CD8-positive, alpha-beta T cell (primary cell): ENCODE measurements at regions of chr5 and their contacts with region 1.

Region 1: GRCh38 chr5:73565139-73565968 is at the starts of genes ANKRA2 and UTP15:
- DNase-seq: peak; percentile 97 to 100 (median 99)
- ATAC-seq: peak; percentile 96
- H3K4me3 ChIP-seq: peak within 1 kb of the TSS; percentile 72 to 81
- H3K4me3 Mint-ChIP-seq: peak within 1 kb of the TSS; percentile 100
- H3K27ac ChIP-seq: peak within 1 kb of the TSS; percentile 94 to 95
- H3K27ac Mint-ChIP-seq: peak within 1 kb of the TSS; percentile 100
- H3K4me1 ChIP-seq: peaks cover 26% of the 10 kb centered on the region
- H3K4me1 Mint-ChIP-seq: peaks cover 58% of the 10 kb centered on the region
- H3K27me3 ChIP-seq: no peaks in the 10 kb centered on the region
- H3K27me3 Mint-ChIP-seq: no peaks in the 10 kb centered on the region
- CTCF ChIP-seq: no peak
- total RNA-seq, gene ANKRA2: 43.4 to 44.1 TPM
- total RNA-seq, gene UTP15: 60.9 to 69.1 TPM

Region 2: DNA sequence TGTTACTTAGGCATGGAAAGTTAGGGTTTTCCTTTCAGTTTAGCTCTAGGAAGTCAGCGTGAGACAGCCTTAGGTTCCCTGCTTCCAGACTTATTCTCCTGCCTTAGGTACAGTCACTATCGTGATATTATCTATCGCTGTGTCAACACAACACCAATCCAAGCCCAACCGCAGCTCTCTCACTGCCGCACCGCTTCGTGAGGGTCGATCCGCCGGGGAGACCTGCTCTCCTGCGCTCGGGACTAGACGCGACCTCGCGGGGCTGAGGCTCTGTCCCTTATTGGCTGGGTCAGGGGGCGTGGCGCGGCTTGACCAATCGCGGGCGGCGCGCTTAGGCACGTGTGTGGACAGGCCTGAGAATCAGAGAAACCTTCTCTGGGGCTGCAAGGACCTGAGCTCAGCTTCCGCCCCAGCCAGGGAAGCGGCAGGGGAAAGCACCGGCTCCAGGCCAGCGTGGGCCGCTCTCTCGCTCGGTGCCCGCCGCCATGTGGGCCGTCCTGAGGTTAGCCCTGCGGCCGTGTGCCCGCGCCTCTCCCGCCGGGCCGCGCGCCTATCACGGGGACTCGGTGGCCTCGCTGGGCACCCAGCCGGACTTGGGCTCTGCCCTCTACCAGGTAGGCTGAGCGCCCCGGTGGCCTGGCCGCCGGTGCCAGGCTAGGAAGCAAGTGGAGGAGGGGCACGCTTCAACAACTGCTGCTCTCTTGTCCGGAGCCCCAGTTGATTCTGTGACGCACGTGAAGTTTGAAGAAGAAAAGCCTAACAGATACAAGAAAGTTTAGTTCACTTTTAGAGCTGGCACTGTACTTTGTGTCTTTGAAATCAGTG is 1978.2 kb before region 1 on chr5 and contains the start of gene MCCC2:
- CTCF ChIA-PET with region 1: no interaction called
- POLR2A ChIA-PET with region 1: no interaction called
- intact Hi-C with region 1: loop called in 1 of 2 experiments (anchors 10 kb)
- DNase-seq: peak; percentile 93 to 97 (median 96)
- ATAC-seq: peak; percentile 97
- H3K4me3 ChIP-seq: peak within 1 kb of the TSS; percentile 82 to 88
- H3K4me3 Mint-ChIP-seq: peak within 1 kb of the TSS; percentile 96
- H3K27ac ChIP-seq: peak within 1 kb of the TSS; percentile 72 to 95
- H3K27ac Mint-ChIP-seq: peak within 1 kb of the TSS; percentile 98
- H3K4me1 ChIP-seq: peaks cover 32% of the 10 kb centered on the region
- H3K4me1 Mint-ChIP-seq: peaks cover 45% of the 10 kb centered on the region
- H3K27me3 ChIP-seq: no peaks in the 10 kb centered on the region
- H3K27me3 Mint-ChIP-seq: no peaks in the 10 kb centered on the region
- CTCF ChIP-seq: no peak
- total RNA-seq, gene MCCC2: 16.0 to 18.2 TPM

Region 3: GRCh38 chr5:72847989-72848473 is 717.3 kb before region 1 on chr5:
- CTCF ChIA-PET with region 1: no interaction called
- POLR2A ChIA-PET with region 1: no interaction called
- intact Hi-C with region 1: loop called (anchors 5 to 10 kb)
- DNase-seq: peak; percentile 59 to 91 (median 82)
- ATAC-seq: peak; percentile 81
- H3K4me3 ChIP-seq: peak overlapping the region; percentile 84 to 89
- H3K4me3 Mint-ChIP-seq: peak overlapping the region; percentile 99
- H3K27ac ChIP-seq: peak overlapping the region; percentile 79 to 81
- H3K27ac Mint-ChIP-seq: peak overlapping the region; percentile 98
- H3K4me1 ChIP-seq: peaks cover 29% of the 10 kb centered on the region
- H3K4me1 Mint-ChIP-seq: peaks cover 61% of the 10 kb centered on the region
- H3K27me3 ChIP-seq: no peaks in the 10 kb centered on the region
- H3K27me3 Mint-ChIP-seq: no peaks in the 10 kb centered on the region
- CTCF ChIP-seq: no peak

Region 4: GRCh38 chr5:73498057-73499008 is 67.0 kb before region 1 on chr5 and contains the start of gene BTF3:
- CTCF ChIA-PET with region 1: no interaction called
- POLR2A ChIA-PET with region 1: interaction called, 6 read pairs
- intact Hi-C with region 1: loop called (anchors 1 to 2 kb)
- DNase-seq: peak; percentile 77 to 97 (median 93)
- ATAC-seq: peak; percentile 89
- H3K4me3 ChIP-seq: peak within 1 kb of the TSS; percentile 95 to 96
- H3K4me3 Mint-ChIP-seq: peak within 1 kb of the TSS; percentile 97
- H3K27ac ChIP-seq: peak within 1 kb of the TSS; percentile 97 to 99
- H3K27ac Mint-ChIP-seq: peak within 1 kb of the TSS; percentile 100
- H3K4me1 ChIP-seq: peaks cover 38% of the 10 kb centered on the region
- H3K4me1 Mint-ChIP-seq: peaks cover 50% of the 10 kb centered on the region
- H3K27me3 ChIP-seq: no peaks in the 10 kb centered on the region
- H3K27me3 Mint-ChIP-seq: peaks cover 5% of the 10 kb centered on the region
- CTCF ChIP-seq: no peak
- total RNA-seq, gene BTF3: 808 to 815 TPM

Region 5: DNA sequence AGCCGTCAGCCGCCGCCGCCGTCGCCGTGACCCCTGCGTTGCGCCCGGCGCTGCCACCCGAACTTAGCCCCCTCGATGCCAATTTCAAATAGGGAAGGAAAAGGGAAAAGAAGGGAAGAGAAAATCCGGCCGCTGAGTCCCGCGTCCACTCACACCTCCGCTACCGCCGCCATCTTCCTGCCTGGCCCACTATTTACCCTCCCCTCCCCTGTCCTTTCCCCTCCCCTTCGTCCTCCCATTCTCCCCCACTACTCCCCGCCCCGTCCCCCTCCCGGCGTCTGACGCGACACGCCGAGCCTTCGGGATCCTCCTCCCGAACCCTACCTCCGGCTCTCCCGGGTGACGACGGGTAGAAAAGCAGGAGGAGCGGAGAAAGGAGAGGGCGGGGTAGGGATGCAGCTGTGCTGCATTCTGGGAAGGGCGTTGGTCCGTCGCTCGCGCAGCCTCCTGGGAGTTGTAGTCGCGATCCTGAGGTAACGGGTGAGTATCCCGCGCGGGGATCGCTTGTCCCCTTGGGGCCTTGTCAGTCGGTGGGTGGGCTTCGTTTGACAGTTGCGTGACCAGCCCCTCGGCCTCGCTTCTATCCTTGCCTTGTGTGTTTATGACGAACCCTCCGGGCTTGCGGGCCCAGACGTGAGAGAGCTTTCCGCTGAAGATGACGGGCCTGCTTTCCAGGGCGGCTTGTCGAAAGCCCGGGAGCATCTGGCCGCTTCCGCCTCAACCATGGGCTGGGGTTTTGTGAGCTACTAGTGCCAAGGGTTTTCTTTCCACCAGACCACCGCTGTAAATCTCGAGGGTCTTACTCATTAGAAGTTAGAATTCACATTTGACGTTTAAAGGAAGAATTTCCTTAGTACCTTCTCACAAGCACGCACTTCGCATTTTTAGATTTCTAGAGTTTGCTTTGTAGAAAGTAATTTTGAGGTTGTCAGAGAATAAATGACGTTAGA is 1946.4 kb after region 1 on chr5 and contains the starts of genes CERT1 and POLK:
- CTCF ChIA-PET with region 1: no interaction called
- POLR2A ChIA-PET with region 1: no interaction called
- intact Hi-C with region 1: loop called in 1 of 2 experiments (anchors 10 kb)
- DNase-seq: peak; percentile 78 to 97 (median 89)
- ATAC-seq: peak; percentile 87
- H3K4me3 ChIP-seq: peak within 1 kb of the TSS; percentile 72 to 79
- H3K4me3 Mint-ChIP-seq: peak within 1 kb of the TSS; percentile 96
- H3K27ac ChIP-seq: peak within 1 kb of the TSS; percentile 74 to 78
- H3K27ac Mint-ChIP-seq: peak within 1 kb of the TSS; percentile 97
- H3K4me1 ChIP-seq: peaks cover 29% of the 10 kb centered on the region
- H3K4me1 Mint-ChIP-seq: peaks cover 64% of the 10 kb centered on the region
- H3K27me3 ChIP-seq: no peaks in the 10 kb centered on the region
- H3K27me3 Mint-ChIP-seq: no peaks in the 10 kb centered on the region
- CTCF ChIP-seq: no peak
- total RNA-seq, gene CERT1: 29.2 to 36.4 TPM
- total RNA-seq, gene POLK: 6.9 to 10.0 TPM